Aorta (tissue), 5 donors: ENCODE measurements at regions of chr1 and their contacts with region 1.

Region 1: GRCh38 chr1:12619792-12620487 is 1.9 kb upstream of the DHRS3 start:
- DNase-seq: peak; percentile 91 to 94
- ATAC-seq: peak; percentile 83
- H3K4me3 ChIP-seq: peak overlapping the region; percentile 13 to 92
- H3K27ac ChIP-seq: peak overlapping the region in 1 of 2 donors; percentile 92
- H3K4me1 ChIP-seq: no peaks in the 10 kb centered on the region
- H3K27me3 ChIP-seq: no peaks in the 10 kb centered on the region

Region 2: DNA sequence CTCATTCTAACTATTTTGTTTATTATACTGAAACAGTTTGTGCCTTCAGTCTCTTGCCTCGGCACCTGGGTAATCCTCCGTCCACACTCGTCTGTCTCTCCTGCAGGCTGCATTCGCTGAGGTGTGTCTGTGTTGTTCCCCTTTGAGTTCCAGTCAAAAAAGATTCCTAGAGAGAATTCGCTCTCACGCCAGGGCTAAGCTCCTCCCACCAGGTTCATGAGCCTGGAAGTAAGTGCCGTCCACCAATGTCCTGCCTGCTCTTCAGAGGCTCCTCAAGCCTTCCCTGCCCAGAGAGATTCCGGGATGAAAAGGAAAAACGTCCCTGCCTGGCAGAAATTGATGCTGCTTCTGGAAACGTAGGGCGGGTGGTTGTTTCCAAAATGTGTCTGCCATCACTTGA is 706.6 kb before region 1 on chr1:
- intact Hi-C with region 1: no loop called
- DNase-seq: no peak
- ATAC-seq: no peak
- H3K4me3 ChIP-seq: no peak overlapping the region
- H3K27ac ChIP-seq: no peak overlapping the region
- H3K4me1 ChIP-seq: no peaks in the 10 kb centered on the region
- H3K27me3 ChIP-seq: peaks cover 0 to 5% of the 10 kb centered on the region in 2 donors

Region 3: GRCh38 chr1:12275369-12275768 is 344.6 kb before region 1 on chr1:
- intact Hi-C with region 1: loop called in 1 of 2 experiments (anchors 5 kb)
- DNase-seq: peak; percentile 63 to 84
- ATAC-seq: no peak
- H3K4me3 ChIP-seq: no peak overlapping the region
- H3K27ac ChIP-seq: no peak overlapping the region
- H3K4me1 ChIP-seq: no peaks in the 10 kb centered on the region
- H3K27me3 ChIP-seq: no peaks in the 10 kb centered on the region

Region 4: GRCh38 chr1:12407050-12407961 is 212.6 kb before region 1 on chr1:
- intact Hi-C with region 1: loop called (anchors 2 to 5 kb)
- DNase-seq: no peak
- ATAC-seq: peak; percentile 65
- H3K4me3 ChIP-seq: no peak overlapping the region
- H3K27ac ChIP-seq: peak overlapping the region; percentile 19 to 57
- H3K4me1 ChIP-seq: peaks cover 4 to 6% of the 10 kb centered on the region in 2 donors
- H3K27me3 ChIP-seq: no peaks in the 10 kb centered on the region

Region 5: DNA sequence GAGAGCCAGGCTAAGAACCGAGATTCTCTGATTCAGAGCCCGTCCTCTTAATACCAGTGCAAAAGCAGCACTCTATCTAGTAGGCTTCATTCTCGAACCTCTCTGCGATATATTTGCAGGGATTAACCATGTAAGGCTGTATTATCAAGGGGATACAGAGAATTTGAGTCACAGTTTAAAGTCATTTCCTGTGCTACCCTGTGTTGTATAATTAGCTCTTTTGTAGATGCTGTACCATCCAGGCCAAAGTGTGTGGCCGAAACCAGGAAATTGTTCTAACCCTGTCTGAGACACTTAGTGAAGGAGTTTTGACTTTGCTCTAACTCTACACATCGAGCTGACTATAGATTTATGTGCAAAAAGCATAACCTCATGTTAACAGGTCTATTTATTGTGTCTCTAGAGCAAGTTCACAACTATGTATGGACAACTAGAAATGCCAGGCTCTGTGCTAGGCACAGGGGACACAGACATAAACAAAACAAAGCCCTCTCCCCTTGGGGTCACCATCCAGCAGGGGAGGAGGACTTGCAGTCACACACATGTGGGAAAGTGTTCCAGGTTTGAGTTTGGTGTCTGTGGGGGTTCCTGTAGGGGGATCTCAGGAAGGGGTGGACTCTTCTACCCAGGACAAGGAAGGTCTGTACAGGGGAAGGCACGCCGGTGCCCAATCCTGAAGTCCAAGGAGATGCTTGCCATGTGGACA is 184.1 kb before region 1 on chr1:
- intact Hi-C with region 1: loop called in 1 of 2 experiments (anchors 1 kb)
- DNase-seq: no peak
- ATAC-seq: peak; percentile 61
- H3K4me3 ChIP-seq: no peak overlapping the region
- H3K27ac ChIP-seq: peak overlapping the region; percentile 73 to 91
- H3K4me1 ChIP-seq: peaks cover 2 to 13% of the 10 kb centered on the region in 2 donors
- H3K27me3 ChIP-seq: no peaks in the 10 kb centered on the region

Region 6: DNA sequence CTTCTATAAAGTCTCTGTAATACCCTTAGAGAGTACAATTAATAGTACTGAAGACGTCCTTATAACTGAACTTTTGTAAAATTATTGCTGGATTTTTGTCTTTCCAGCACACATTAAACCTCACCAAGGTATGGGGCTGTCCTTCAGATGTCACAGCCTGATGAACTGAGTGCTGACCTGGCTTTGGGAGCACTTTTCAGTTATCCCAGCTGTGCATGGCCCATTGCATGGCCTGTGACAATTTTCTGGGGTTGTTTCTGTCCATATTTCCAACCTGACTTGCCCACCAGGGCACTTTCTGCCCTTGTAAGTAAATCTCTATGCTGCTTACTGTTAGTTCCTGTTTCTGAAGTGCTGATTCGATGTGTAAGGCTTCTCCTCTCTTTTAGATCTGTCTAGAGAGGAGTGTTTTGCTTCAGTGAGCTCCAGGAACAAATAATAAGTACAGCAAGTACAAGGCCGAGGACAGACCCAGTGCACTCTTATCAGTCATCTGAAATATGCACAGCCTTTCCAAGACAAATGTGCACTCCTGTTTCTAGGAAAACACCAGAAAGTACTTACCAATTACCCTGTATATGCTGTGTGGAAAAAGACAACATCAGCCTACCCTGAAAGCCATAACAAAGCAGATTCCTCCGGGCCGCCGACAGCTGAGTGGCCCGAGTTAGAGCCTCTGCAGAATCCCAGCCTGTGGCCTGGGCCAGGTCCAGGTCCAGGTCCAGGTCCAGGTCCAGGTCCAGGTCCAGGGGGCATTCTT is 123.6 kb before region 1 on chr1:
- intact Hi-C with region 1: loop called in 1 of 2 experiments (anchors 5 kb)
- DNase-seq: no peak
- ATAC-seq: peak; percentile 88
- H3K4me3 ChIP-seq: no peak overlapping the region
- H3K27ac ChIP-seq: peak overlapping the region; percentile 50 to 91
- H3K4me1 ChIP-seq: peaks cover 2 to 8% of the 10 kb centered on the region in 2 donors
- H3K27me3 ChIP-seq: no peaks in the 10 kb centered on the region

Region 7: GRCh38 chr1:12556368-12556930 is 63.5 kb before region 1 on chr1:
- intact Hi-C with region 1: loop called (anchors 5 kb)
- DNase-seq: peak; percentile 71 to 78
- ATAC-seq: peak; percentile 79
- H3K4me3 ChIP-seq: no peak overlapping the region
- H3K27ac ChIP-seq: peak overlapping the region; percentile 36 to 92
- H3K4me1 ChIP-seq: no peaks in the 10 kb centered on the region
- H3K27me3 ChIP-seq: no peaks in the 10 kb centered on the region